Sigmoid colon (tissue), 7 donors: ENCODE measurements at regions of chr9 and their contacts with region 1.

Region 1: DNA sequence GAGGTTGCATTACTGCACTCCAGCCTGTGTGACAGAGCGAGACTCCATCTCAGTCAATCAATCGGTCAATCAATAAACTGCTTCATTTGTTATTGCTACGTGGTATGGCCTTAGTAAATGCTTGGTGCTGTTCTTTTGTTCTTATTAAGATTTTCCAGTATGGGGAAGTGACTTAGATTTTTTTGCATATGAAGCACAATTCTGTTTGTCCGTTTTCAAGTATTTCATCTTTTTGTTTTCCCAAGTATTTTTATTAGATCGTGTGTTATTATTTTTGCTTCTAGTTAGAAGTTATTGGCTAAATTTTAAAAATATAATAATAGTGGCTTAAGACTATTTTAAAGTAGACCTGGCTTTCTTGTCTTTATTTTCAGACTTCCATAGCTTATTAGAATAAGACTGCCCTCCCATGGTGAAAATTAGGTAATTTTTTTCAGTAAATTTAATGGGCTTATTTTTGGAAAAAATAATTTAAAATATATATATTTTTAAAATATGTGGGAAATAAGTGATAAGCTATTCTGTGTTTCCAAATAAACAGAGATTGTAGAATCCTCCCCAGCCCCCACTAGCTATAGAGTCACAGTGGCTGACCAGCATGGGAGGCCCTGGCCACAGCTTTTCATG is 14.7 kb upstream of the OMD start:
- DNase-seq: no peak
- H3K4me3 ChIP-seq: no peak overlapping the region
- H3K27ac ChIP-seq: no peak overlapping the region
- H3K4me1 ChIP-seq: peaks cover 0 to 6% (median 2%) of the 10 kb centered on the region in 4 donors
- H3K27me3 ChIP-seq: no peaks in the 10 kb centered on the region
- CTCF ChIP-seq: peak; percentile 7 to 48 (median 22)
- EP300 ChIP-seq: no peak
- POLR2A ChIP-seq: no peak

Region 2: GRCh38 chr9:92342825-92343488 is 96.1 kb before region 1 on chr9:
- intact Hi-C with region 1: loop called (anchors 1 kb)
- DNase-seq: no peak
- H3K4me3 ChIP-seq: no peak overlapping the region
- H3K27ac ChIP-seq: peak overlapping the region in 2 of 4 donors; percentile 17 to 57
- H3K4me1 ChIP-seq: peaks cover 0 to 16% (median 2%) of the 10 kb centered on the region in 4 donors
- H3K27me3 ChIP-seq: no peaks in the 10 kb centered on the region
- CTCF ChIP-seq: peak in 3 of 4 experiments; percentile 25 to 46 (median 39)
- EP300 ChIP-seq: no peak
- POLR2A ChIP-seq: no peak

Region 3: DNA sequence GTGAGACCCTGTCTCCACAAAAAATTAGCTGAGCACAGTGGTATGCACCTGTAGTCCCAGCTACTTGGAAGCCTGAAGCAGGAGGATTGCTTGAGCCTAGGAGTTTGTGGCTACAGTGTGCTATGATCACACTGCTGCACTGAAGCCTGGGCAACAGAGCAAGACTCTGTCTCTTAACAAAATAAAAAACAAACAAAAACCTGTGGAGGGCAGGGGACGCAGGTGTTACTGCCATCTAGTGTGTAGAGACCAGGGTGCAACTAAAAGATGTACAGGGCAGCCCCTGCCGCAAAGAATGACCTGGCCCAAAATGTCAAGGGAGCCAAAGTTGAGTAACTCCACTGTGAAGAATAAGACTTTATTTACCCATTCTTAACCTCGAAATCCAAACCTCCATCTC is 16.2 kb after region 1 on chr9:
- intact Hi-C with region 1: no loop called
- DNase-seq: no peak
- H3K4me3 ChIP-seq: no peak overlapping the region
- H3K27ac ChIP-seq: no peak overlapping the region
- H3K4me1 ChIP-seq: peaks cover 0 to 9% (median 7%) of the 10 kb centered on the region in 4 donors
- H3K27me3 ChIP-seq: no peaks in the 10 kb centered on the region
- CTCF ChIP-seq: no peak
- EP300 ChIP-seq: no peak
- POLR2A ChIP-seq: no peak

Region 4: GRCh38 chr9:94199776-94200175 is 1760.8 kb after region 1 on chr9:
- intact Hi-C with region 1: no loop called
- DNase-seq: no peak
- H3K4me3 ChIP-seq: no peak overlapping the region
- H3K27ac ChIP-seq: no peak overlapping the region
- H3K4me1 ChIP-seq: no peaks in the 10 kb centered on the region
- H3K27me3 ChIP-seq: no peaks in the 10 kb centered on the region
- CTCF ChIP-seq: no peak
- EP300 ChIP-seq: no peak
- POLR2A ChIP-seq: no peak